ENCODE measurements at regions of chr5 and their contacts with region 1.

Region 1: DNA sequence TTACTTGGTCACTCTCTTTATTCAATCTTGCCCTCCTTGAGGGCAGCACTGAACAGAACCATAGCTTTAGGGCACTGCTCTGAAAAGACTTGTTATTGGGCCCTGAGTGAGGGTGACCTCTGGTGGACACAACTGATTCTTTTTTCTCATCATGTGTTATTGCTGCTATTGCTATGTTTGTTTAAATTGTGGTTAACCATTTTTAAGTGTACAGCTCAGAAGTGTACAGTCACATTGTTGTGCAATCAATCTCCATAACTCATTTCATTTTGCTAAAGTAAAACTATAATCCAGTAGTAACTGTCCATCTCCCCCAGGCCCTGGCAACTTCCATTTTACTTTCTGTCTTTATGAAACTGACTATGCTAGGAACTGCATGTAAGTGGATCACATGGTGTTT is 351.1 kb upstream of the RIOK2 start:
- DNase-seq: peak; percentile 47 to 62
- H3K4me3 ChIP-seq: no peak overlapping the region
- H3K4me3 Mint-ChIP-seq: no peak overlapping the region
- H3K27ac Mint-ChIP-seq: no peak overlapping the region
- H3K4me1 ChIP-seq: no peaks in the 10 kb centered on the region
- H3K4me1 Mint-ChIP-seq: no peaks in the 10 kb centered on the region
- H3K27me3 ChIP-seq: no peaks in the 10 kb centered on the region
- H3K27me3 Mint-ChIP-seq: no peaks in the 10 kb centered on the region
- CTCF ChIP-seq: peak; percentile 65 to 72

Region 2: GRCh38 chr5:97231025-97231636 is 303.0 kb before region 1 on chr5:
- CTCF ChIA-PET with region 1: interaction called, 16 read pairs
- POLR2A ChIA-PET with region 1: interaction called, 4 read pairs
- intact Hi-C with region 1: loop called (anchors 1 kb)
- DNase-seq: peak in 1 of 2 experiments; percentile 72
- H3K4me3 ChIP-seq: no peak overlapping the region
- H3K4me3 Mint-ChIP-seq: no peak overlapping the region
- H3K27ac Mint-ChIP-seq: no peak overlapping the region
- H3K4me1 ChIP-seq: no peaks in the 10 kb centered on the region
- H3K4me1 Mint-ChIP-seq: no peaks in the 10 kb centered on the region
- H3K27me3 ChIP-seq: no peaks in the 10 kb centered on the region
- H3K27me3 Mint-ChIP-seq: no peaks in the 10 kb centered on the region
- CTCF ChIP-seq: peak; percentile 77 to 82

Region 3: GRCh38 chr5:97250113-97250512 is 284.1 kb before region 1 on chr5:
- CTCF ChIA-PET with region 1: no interaction called
- POLR2A ChIA-PET with region 1: no interaction called
- intact Hi-C with region 1: no loop called
- DNase-seq: no peak
- H3K4me3 ChIP-seq: no peak overlapping the region
- H3K4me3 Mint-ChIP-seq: no peak overlapping the region
- H3K27ac Mint-ChIP-seq: no peak overlapping the region
- H3K4me1 ChIP-seq: no peaks in the 10 kb centered on the region
- H3K4me1 Mint-ChIP-seq: no peaks in the 10 kb centered on the region
- H3K27me3 ChIP-seq: no peaks in the 10 kb centered on the region
- H3K27me3 Mint-ChIP-seq: no peaks in the 10 kb centered on the region
- CTCF ChIP-seq: no peak

Region 4: DNA sequence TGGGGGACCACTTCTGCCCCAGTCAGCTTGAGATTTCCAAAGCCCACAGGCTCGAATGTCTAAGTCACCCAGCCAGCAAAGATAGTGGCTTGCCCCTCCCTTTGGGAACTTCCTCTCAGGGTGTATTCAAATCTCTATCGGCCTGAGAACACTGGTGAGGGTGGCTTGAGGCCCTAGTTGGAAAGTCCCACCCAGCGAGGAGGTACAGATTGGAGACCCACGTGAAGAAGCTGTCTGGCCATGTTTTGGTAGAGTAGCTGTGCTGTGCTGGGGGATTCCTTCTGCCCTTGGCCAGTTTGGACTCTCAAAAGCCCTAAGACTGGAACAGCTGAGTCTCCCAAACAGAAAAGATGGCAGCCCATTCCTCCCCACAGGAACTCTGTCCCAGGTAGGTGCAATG is 178.4 kb before region 1 on chr5:
- CTCF ChIA-PET with region 1: no interaction called
- POLR2A ChIA-PET with region 1: no interaction called
- intact Hi-C with region 1: loop called (anchors 5 kb)
- DNase-seq: no peak
- H3K4me3 ChIP-seq: no peak overlapping the region
- H3K4me3 Mint-ChIP-seq: no peak overlapping the region
- H3K27ac Mint-ChIP-seq: no peak overlapping the region
- H3K4me1 ChIP-seq: no peaks in the 10 kb centered on the region
- H3K4me1 Mint-ChIP-seq: no peaks in the 10 kb centered on the region
- H3K27me3 ChIP-seq: no peaks in the 10 kb centered on the region
- H3K27me3 Mint-ChIP-seq: no peaks in the 10 kb centered on the region
- CTCF ChIP-seq: no peak

Region 5: DNA sequence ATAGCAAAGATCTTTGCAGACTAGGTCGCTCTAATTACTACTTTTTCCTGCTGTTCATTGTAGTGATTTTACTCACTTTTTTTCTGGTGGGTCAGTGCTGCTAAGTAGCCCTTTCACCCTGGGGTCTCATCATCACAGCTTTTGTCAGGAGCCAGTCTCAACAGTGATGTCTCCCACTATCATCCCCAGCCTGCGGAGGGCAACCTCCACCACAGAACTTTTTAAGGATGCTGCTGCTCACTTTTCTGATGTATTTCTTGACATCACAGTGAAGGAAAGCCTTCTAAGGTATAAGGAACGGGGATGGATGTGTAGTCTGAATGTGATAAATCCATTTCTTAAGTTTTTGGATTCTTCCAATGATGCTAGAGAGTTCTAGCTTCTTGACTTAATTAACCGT is 108.7 kb before region 1 on chr5:
- CTCF ChIA-PET with region 1: interaction called, 7 read pairs
- POLR2A ChIA-PET with region 1: no interaction called
- intact Hi-C with region 1: loop called (anchors 1 kb)
- DNase-seq: peak in 1 of 2 experiments; percentile 23
- H3K4me3 ChIP-seq: no peak overlapping the region
- H3K4me3 Mint-ChIP-seq: no peak overlapping the region
- H3K27ac Mint-ChIP-seq: no peak overlapping the region
- H3K4me1 ChIP-seq: no peaks in the 10 kb centered on the region
- H3K4me1 Mint-ChIP-seq: no peaks in the 10 kb centered on the region
- H3K27me3 ChIP-seq: no peaks in the 10 kb centered on the region
- H3K27me3 Mint-ChIP-seq: peaks cover 2% of the 10 kb centered on the region
- CTCF ChIP-seq: peak; percentile 21 to 22

Measured in Caco-2 (cell line).